Esophagus muscularis mucosa (tissue), 4 donors: ENCODE measurements at regions of chr17 and their contacts with region 1.

Region 1: DNA sequence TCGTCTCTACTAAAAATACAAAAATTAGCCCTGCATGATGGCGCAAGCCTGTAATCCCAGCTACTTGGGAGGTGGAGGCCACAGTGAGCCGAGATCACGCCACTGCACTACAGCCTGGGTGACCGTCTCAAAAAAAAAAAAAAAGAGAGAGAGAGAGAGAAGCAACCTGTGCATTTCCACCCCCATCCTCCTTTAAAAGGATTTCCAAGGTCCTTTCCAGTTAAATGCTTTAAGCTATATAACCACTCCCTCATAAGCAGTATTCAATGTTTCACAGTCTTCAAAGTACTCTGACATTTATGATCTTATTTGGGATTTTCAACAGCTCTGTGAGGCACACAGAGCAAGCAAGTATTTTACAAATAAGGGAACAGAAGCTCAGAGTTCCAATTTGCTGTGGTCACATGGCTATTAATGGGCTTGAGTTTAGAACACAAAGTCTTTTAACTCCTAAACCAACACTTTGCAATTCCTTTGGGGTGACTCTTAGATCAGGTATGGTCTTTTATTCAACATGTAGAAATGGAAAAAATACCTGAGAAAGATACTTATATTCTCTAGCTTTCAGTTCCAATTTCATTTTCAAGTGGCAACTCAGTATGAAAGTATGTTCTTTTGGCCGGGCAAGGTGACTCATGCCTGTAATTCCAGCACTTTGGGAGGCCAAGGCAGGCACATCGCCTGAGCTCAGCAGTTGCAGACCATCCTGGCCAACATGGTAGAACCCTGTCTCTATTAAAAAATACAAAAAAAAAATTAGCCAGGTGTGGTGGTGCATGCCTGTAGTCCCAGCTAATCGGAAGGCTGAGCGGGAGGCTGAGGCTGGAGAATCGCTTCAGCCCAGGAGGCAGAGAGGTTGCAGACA is 31.3 kb downstream of the SPOP start:
- DNase-seq: no peak
- H3K4me3 ChIP-seq: peak overlapping the region; percentile 41 to 53 (median 48)
- H3K27ac ChIP-seq: peak overlapping the region; percentile 83 to 93 (median 88)
- H3K4me1 ChIP-seq: peaks cover 30 to 83% (median 66%) of the 10 kb centered on the region in 4 donors
- H3K27me3 ChIP-seq: no peaks in the 10 kb centered on the region
- CTCF ChIP-seq: no peak
- EP300 ChIP-seq: peak; percentile 46
- POLR2A ChIP-seq: no peak

Region 2: DNA sequence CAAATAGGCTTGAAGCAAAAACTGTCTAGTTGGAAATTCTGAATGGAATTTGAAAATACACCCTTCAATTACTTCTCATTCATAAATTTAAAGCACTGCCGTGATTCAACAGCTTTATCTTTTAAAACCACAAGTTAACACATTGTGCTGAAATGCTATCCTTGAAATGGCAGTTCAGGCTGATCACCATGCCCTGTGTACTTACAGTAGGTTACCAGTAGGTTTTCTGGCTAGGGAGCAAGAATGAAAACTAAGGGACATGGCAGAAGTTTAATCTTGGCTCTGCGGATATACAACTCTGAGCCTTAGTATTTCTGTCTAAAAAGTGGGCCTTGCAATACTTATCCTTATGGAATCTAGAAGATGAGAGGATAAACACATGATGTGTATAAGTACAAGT is 42.9 kb before region 1 on chr17:
- intact Hi-C with region 1: no loop called
- DNase-seq: no peak
- H3K4me3 ChIP-seq: no peak overlapping the region
- H3K27ac ChIP-seq: peak overlapping the region; percentile 3 to 67 (median 50)
- H3K4me1 ChIP-seq: peaks cover 11 to 46% (median 33%) of the 10 kb centered on the region in 4 donors
- H3K27me3 ChIP-seq: no peaks in the 10 kb centered on the region
- CTCF ChIP-seq: peak in 2 of 3 experiments; percentile 11 to 33
- EP300 ChIP-seq: no peak
- POLR2A ChIP-seq: no peak

Region 3: GRCh38 chr17:49694847-49695683 is 48.4 kb after region 1 on chr17:
- intact Hi-C with region 1: loop called (anchors 5 kb)
- DNase-seq: peak; percentile 94
- H3K4me3 ChIP-seq: peak overlapping the region in 3 of 4 donors; percentile 1 to 22 (median 4)
- H3K27ac ChIP-seq: peak overlapping the region in 1 of 4 donors; percentile 42
- H3K4me1 ChIP-seq: peaks cover 28 to 39% (median 36%) of the 10 kb centered on the region in 4 donors
- H3K27me3 ChIP-seq: no peaks in the 10 kb centered on the region
- CTCF ChIP-seq: peak; percentile 97 to 99 (median 98)
- EP300 ChIP-seq: no peak
- POLR2A ChIP-seq: no peak